ENCODE measurements at regions of chrX and their contacts with region 1.

Region 1: DNA sequence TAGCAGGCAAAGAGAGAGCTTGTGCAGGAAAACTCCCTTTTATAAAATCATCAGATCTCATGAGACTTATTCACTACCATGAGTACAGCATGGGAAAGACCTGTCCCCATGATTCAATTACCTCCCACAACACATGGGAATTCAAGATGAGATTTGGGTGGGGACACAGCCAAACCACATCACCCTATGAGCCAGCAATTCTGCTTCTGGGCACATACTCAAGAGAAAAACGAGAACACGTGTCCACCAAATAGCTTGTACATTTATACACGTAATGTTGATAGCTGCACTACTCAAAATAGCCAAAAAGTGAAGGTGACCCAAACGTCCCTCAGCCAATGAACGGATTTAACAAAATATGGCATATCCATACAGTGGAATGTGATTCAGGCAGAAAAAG is 94.5 kb upstream of the DHRSX start:
- DNase-seq: no peak
- ATAC-seq: no peak
- H3K4me3 ChIP-seq: no peak overlapping the region
- H3K4me3 Mint-ChIP-seq: no peak overlapping the region
- H3K27ac ChIP-seq: no peak overlapping the region
- H3K27ac Mint-ChIP-seq: no peak overlapping the region
- H3K4me1 ChIP-seq: peaks cover 8% of the 10 kb centered on the region
- H3K4me1 Mint-ChIP-seq: peaks cover 12% of the 10 kb centered on the region
- H3K27me3 ChIP-seq: no peaks in the 10 kb centered on the region
- H3K27me3 Mint-ChIP-seq: no peaks in the 10 kb centered on the region
- CTCF ChIP-seq: no peak

Region 2: GRCh38 chrX:1246816-1247215 is 1348.4 kb before region 1 on chrX:
- CTCF ChIA-PET with region 1: no interaction called
- POLR2A ChIA-PET with region 1: no interaction called
- intact Hi-C with region 1: loop called (anchors 2 kb)
- DNase-seq: peak; percentile 59 to 90 (median 80)
- ATAC-seq: peak; percentile 74
- H3K4me3 ChIP-seq: no peak overlapping the region
- H3K4me3 Mint-ChIP-seq: peak overlapping the region; percentile 62
- H3K27ac ChIP-seq: no peak overlapping the region
- H3K27ac Mint-ChIP-seq: peak overlapping the region; percentile 15
- H3K4me1 ChIP-seq: peaks cover 49% of the 10 kb centered on the region
- H3K4me1 Mint-ChIP-seq: peaks cover 37% of the 10 kb centered on the region
- H3K27me3 ChIP-seq: no peaks in the 10 kb centered on the region
- H3K27me3 Mint-ChIP-seq: no peaks in the 10 kb centered on the region
- CTCF ChIP-seq: peak; percentile 81

Region 3: GRCh38 chrX:1323315-1323714 is 1271.9 kb before region 1 on chrX:
- CTCF ChIA-PET with region 1: no interaction called
- POLR2A ChIA-PET with region 1: no interaction called
- intact Hi-C with region 1: loop called (anchors 1 to 2 kb)
- DNase-seq: peak; percentile 18 to 77 (median 38)
- ATAC-seq: peak; percentile 57
- H3K4me3 ChIP-seq: no peak overlapping the region
- H3K4me3 Mint-ChIP-seq: no peak overlapping the region
- H3K27ac ChIP-seq: no peak overlapping the region
- H3K27ac Mint-ChIP-seq: no peak overlapping the region
- H3K4me1 ChIP-seq: peaks cover 8% of the 10 kb centered on the region
- H3K4me1 Mint-ChIP-seq: peaks cover 5% of the 10 kb centered on the region
- H3K27me3 ChIP-seq: peaks cover 2 to 4% of the 10 kb centered on the region in 2 experiments
- H3K27me3 Mint-ChIP-seq: peaks cover 13% of the 10 kb centered on the region
- CTCF ChIP-seq: peak; percentile 63

Region 4: GRCh38 chrX:1649621-1650020 is 945.6 kb before region 1 on chrX:
- CTCF ChIA-PET with region 1: no interaction called
- POLR2A ChIA-PET with region 1: no interaction called
- intact Hi-C with region 1: loop called (anchors 1 kb)
- DNase-seq: no peak
- ATAC-seq: no peak
- H3K4me3 ChIP-seq: no peak overlapping the region
- H3K4me3 Mint-ChIP-seq: no peak overlapping the region
- H3K27ac ChIP-seq: no peak overlapping the region
- H3K27ac Mint-ChIP-seq: no peak overlapping the region
- H3K4me1 ChIP-seq: peaks cover 9% of the 10 kb centered on the region
- H3K4me1 Mint-ChIP-seq: peaks cover 4% of the 10 kb centered on the region
- H3K27me3 ChIP-seq: peaks cover 0 to 3% of the 10 kb centered on the region in 2 experiments
- H3K27me3 Mint-ChIP-seq: peaks cover 5% of the 10 kb centered on the region
- CTCF ChIP-seq: no peak

Region 5: DNA sequence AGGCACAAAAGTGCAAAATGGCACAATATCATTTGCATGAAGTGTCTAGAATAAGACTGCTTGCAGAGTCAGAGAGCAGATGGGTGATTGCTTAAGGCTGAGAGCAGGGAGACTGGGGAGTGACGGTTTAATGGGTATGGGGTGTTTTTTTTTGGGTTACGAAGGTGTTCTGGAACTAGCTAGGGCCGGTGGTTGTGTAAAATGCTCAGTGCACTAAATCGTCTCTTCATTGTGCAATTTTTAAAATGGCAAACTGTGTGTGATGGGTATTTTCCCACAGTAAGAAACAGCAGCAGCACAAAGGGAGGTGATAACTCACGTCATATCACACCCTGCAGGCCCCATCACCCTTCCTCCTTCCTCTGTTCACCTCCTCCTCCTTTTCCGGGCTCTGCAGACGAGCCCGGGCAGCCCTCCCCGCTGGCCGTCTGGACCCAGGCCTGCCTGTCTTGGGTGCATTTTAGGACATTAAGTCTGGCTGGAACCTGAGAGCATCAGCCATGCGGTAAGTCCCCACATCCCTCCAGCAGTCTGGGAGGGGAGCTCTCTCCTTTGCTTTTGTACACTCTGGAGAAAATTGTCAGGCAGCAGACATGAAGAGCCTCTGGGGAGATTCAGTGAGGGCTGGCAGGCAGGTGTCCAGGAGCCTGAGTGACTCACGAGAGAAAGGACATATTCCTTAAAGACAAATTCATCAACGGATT is 937.7 kb before region 1 on chrX:
- CTCF ChIA-PET with region 1: no interaction called
- POLR2A ChIA-PET with region 1: no interaction called
- intact Hi-C with region 1: loop called (anchors 1 kb)
- DNase-seq: peak in 13 of 14 experiments; percentile 11 to 91 (median 47)
- ATAC-seq: peak; percentile 37
- H3K4me3 ChIP-seq: peak overlapping the region; percentile 65
- H3K4me3 Mint-ChIP-seq: peak overlapping the region; percentile 87
- H3K27ac ChIP-seq: peak overlapping the region; percentile 59 to 80
- H3K27ac Mint-ChIP-seq: peak overlapping the region; percentile 96
- H3K4me1 ChIP-seq: peaks cover 36% of the 10 kb centered on the region
- H3K4me1 Mint-ChIP-seq: peaks cover 52% of the 10 kb centered on the region
- H3K27me3 ChIP-seq: no peaks in the 10 kb centered on the region
- H3K27me3 Mint-ChIP-seq: no peaks in the 10 kb centered on the region
- CTCF ChIP-seq: no peak

Measured in CD4-positive, alpha-beta T cell (primary cell).